ENCODE measurements at regions of chr19 and their contacts with region 1.

Region 1: DNA sequence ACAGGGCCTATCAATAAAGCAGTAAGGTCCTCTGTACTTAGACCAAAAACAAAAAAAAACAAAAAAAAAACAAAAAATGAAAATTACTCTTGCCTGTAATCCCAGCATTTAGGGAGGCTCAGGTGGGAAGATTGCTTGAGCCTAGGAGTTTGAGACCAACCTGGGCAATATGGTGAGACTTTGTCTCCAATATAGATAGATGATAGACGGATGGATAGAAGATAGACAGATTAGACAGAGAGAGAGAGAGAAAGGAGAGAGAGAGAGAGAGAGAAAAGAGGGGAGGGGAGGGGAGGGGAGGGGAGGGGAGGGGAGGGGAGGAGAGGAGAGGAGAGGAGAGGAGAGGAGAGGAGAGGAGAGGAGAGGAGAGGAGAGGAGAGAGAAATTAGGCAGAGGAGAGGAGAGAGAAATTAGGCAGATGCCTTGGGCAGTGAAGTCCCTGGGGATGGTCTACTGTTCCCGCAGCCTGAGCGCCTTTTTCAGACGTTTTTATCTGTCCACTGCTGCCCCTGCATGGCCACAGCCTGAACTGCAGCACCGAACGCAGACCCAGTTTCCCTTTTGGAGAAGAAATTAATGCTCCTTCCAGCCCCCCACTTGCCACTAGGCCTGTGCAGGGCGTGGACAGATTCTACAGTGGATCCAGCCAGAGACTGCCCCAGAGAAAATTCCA is 9.8 kb upstream of the ZNF627 start:
- DNase-seq: peak; percentile 65
- H3K4me3 Mint-ChIP-seq: no peak overlapping the region
- H3K27ac Mint-ChIP-seq: no peak overlapping the region
- H3K4me1 Mint-ChIP-seq: peaks cover 13% of the 10 kb centered on the region
- H3K27me3 Mint-ChIP-seq: no peaks in the 10 kb centered on the region
- CTCF ChIP-seq: peak; percentile 94

Region 2: DNA sequence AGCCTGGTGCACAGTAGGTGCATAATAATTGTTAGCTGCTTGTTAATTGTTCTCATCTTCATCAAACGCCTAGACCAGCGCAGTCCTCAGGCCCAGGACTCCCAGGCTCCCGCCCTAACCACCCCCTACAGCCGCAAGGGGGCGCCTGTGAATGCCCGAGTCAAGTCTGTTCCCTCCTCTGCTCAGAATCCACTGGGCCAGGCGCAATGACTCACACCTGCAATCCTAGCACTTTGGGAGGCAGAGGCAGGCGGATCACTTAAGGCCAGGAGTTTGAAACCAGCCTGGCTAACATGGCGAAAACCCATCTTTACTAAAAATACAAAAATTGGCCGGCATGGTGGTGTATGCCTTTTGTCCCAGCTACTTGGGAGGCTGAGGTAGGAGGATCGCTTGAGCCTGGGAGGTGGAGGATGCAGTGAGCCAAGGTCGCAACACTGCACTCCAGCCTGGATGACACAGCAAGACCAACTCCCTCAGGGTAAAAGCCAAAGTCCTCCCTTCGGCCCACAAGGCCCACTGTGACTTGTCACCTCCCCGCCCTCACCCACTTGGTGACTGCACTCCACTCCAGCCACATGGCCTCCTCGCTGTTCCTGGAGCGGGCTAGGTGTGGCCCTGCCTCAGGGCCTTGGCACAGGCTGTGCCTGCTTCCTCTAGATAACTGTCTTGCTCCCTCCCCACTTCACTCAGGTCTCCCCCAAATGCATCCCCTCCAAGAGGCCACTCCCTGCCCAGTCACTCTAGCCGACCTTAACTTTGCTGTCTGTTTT is 90.9 kb before region 1 on chr19:
- CTCF ChIA-PET with region 1: interaction called, 5 read pairs
- POLR2A ChIA-PET with region 1: no interaction called
- intact Hi-C with region 1: loop called (anchors 1 kb)
- DNase-seq: peak; percentile 93
- H3K4me3 Mint-ChIP-seq: no peak overlapping the region
- H3K27ac Mint-ChIP-seq: peak overlapping the region; percentile 40
- H3K4me1 Mint-ChIP-seq: peaks cover 5% of the 10 kb centered on the region
- H3K27me3 Mint-ChIP-seq: no peaks in the 10 kb centered on the region
- CTCF ChIP-seq: peak; percentile 73

Region 3: GRCh38 chr19:11535792-11536595 is 51.4 kb before region 1 on chr19:
- CTCF ChIA-PET with region 1: interaction called, 11 read pairs
- POLR2A ChIA-PET with region 1: no interaction called
- intact Hi-C with region 1: loop called (anchors 10 kb)
- DNase-seq: peak; percentile 86
- H3K4me3 Mint-ChIP-seq: peak overlapping the region; percentile 18
- H3K27ac Mint-ChIP-seq: peak overlapping the region; percentile 79
- H3K4me1 Mint-ChIP-seq: peaks cover 11% of the 10 kb centered on the region
- H3K27me3 Mint-ChIP-seq: no peaks in the 10 kb centered on the region
- CTCF ChIP-seq: peak; percentile 85

Region 4: DNA sequence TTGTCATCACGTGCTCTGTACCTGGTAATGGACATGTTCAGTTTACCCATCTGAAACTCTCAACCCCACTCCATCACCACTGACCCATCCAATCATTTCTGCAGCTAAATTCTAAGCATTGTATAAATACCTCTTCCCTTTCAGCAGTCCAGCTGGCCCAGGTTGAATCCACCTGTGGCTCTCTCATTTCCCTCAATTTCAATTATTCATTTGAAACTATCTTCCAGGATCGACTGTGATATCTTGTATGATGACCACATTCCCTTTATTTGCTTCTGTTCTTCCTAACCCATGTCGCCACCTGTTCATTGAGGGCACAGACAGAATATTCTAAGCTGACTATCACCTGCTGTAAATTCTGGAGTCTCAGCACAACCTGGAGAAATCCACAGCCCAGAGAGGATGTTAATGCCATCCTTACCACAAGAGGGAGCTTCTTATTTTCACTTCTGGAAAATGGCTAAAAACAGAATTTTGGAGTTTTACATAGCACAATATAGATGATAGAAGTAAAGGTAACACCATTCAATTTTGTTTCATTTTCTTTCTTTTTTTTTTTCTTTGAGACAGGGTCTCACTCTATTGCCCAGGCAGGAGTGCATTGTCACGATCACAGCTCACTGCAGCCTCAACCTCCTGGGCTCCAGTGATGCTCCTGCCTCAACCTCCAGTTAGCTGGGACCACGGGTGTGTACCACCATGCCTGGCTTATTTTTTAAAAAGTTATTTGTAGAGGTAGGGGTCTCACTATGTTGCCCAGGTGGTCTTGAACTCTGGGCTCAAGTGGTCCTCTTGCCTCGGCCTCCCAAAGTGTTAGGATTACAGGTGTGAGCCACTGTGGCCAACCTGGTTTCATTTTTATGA is 112.7 kb after region 1 on chr19:
- CTCF ChIA-PET with region 1: no interaction called
- POLR2A ChIA-PET with region 1: no interaction called
- intact Hi-C with region 1: no loop called
- DNase-seq: peak; percentile 45
- H3K4me3 Mint-ChIP-seq: no peak overlapping the region
- H3K27ac Mint-ChIP-seq: no peak overlapping the region
- H3K4me1 Mint-ChIP-seq: no peaks in the 10 kb centered on the region
- H3K27me3 Mint-ChIP-seq: no peaks in the 10 kb centered on the region
- CTCF ChIP-seq: peak; percentile 62

Region 5: GRCh38 chr19:11784356-11784755 is 196.9 kb after region 1 on chr19:
- CTCF ChIA-PET with region 1: no interaction called
- POLR2A ChIA-PET with region 1: no interaction called
- intact Hi-C with region 1: no loop called
- DNase-seq: no peak
- H3K4me3 Mint-ChIP-seq: no peak overlapping the region
- H3K27ac Mint-ChIP-seq: no peak overlapping the region
- H3K4me1 Mint-ChIP-seq: no peaks in the 10 kb centered on the region
- H3K27me3 Mint-ChIP-seq: no peaks in the 10 kb centered on the region
- CTCF ChIP-seq: no peak